ENCODE measurements at regions of chr19 and their contacts with region 1.

Region 1: GRCh38 chr19:33905937-33906576 is 109.4 kb downstream of the KCTD15 start:
- DNase-seq: peak; percentile 57
- ATAC-seq: peak; percentile 89
- H3K4me3 ChIP-seq: peak overlapping the region; percentile 74
- H3K27ac ChIP-seq: no peak overlapping the region; the same call in 1 of the 2 replicates
- H3K4me1 ChIP-seq: peaks cover 10% of the 10 kb centered on the region
- H3K27me3 ChIP-seq: no peaks in the 10 kb centered on the region
- CTCF ChIP-seq: no peak

Region 2: GRCh38 chr19:33612928-33613619 is 293.0 kb before region 1 on chr19:
- CTCF ChIA-PET with region 1: no interaction called
- POLR2A ChIA-PET with region 1: no interaction called
- intact Hi-C with region 1: no loop called
- DNase-seq: no peak
- ATAC-seq: no peak
- H3K4me3 ChIP-seq: no peak overlapping the region
- H3K27ac ChIP-seq: no peak overlapping the region
- H3K4me1 ChIP-seq: no peaks in the 10 kb centered on the region
- H3K27me3 ChIP-seq: peaks cover 30% of the 10 kb centered on the region
- CTCF ChIP-seq: no peak

Region 3: GRCh38 chr19:33828266-33829075 is 77.6 kb before region 1 on chr19:
- CTCF ChIA-PET with region 1: no interaction called
- POLR2A ChIA-PET with region 1: no interaction called
- intact Hi-C with region 1: no loop called
- DNase-seq: no peak
- ATAC-seq: no peak
- H3K4me3 ChIP-seq: no peak overlapping the region
- H3K27ac ChIP-seq: no peak overlapping the region
- H3K4me1 ChIP-seq: no peaks in the 10 kb centered on the region; the same call in 1 of the 2 replicates
- H3K27me3 ChIP-seq: no peaks in the 10 kb centered on the region
- CTCF ChIP-seq: no peak

Region 4: DNA sequence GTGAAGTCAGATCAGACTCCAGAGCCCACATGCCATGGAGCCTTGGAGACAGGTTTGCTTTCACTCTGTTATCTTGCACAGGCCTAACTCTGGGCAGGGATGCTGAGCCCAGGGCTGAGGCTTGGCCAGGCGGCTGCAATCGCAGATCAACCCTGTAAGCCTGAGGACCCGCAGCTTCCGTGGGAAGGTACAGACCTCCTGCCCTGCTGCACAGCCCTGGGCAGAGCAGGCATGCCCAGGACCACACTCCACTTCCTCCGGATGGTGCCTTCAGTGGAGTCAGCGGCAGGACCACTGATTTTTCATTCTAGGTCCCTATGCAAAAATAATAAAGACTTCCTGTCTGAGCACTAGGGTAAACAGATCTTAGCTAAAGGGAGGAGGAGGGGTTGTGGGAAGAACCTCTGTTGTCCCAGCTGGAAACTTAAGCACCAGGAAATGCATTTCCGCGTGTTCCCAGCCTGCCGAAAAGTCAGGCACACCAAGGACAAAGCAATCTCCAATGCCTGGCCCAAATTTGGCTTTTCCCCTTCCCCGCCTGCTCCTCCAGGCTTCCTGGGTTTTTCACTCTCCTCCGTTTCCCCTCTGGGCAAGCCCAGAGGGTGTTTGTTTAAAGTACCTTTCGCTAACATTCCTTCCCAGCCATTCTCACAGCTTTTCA is 22.1 kb before region 1 on chr19:
- CTCF ChIA-PET with region 1: interaction called, 14 read pairs
- POLR2A ChIA-PET with region 1: no interaction called
- intact Hi-C with region 1: no loop called
- DNase-seq: peak; percentile 3
- ATAC-seq: peak; percentile 18; the same call in 1 of the 2 replicates
- H3K4me3 ChIP-seq: no peak overlapping the region; the same call in 1 of the 2 replicates
- H3K27ac ChIP-seq: no peak overlapping the region
- H3K4me1 ChIP-seq: no peaks in the 10 kb centered on the region
- H3K27me3 ChIP-seq: no peaks in the 10 kb centered on the region
- CTCF ChIP-seq: no peak

Region 5: GRCh38 chr19:33938812-33939211 is 32.8 kb after region 1 on chr19:
- CTCF ChIA-PET with region 1: no interaction called
- POLR2A ChIA-PET with region 1: no interaction called
- intact Hi-C with region 1: no loop called
- DNase-seq: no peak
- ATAC-seq: no peak
- H3K4me3 ChIP-seq: no peak overlapping the region
- H3K27ac ChIP-seq: no peak overlapping the region
- H3K4me1 ChIP-seq: no peaks in the 10 kb centered on the region
- H3K27me3 ChIP-seq: peaks cover 4% of the 10 kb centered on the region; the same call in 1 of the 2 replicates
- CTCF ChIP-seq: no peak

Measured in PC-3 (cell line).